IMR-90 (cell line): ENCODE measurements at regions of chr11 and their contacts with region 1.

Region 1: DNA sequence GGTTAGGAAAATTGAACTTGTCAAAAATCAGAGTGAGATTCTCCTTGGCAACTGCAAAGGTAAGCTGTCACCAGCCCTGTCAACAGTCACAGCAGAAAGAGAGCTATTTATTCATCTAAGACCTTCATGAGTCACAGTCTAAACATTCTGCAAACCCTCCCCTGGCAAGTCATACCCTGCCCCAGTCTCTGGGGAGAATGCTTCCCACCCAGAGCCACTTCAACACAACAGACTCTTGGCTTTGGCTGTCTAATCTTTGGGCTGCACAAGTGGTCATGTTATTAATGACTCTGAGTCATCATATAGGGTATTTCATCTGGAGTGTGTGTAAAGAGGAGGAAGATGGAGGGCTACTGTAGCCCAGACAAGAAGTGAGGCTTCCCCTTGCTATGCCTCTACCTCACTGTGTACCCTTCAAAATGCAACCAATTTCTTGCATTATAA is 153.4 kb downstream of the CCDC34 start:
- DNase-seq: peak; percentile 93
- ATAC-seq: peak; percentile 65
- H3K4me3 ChIP-seq: no peak overlapping the region
- H3K27ac ChIP-seq: no peak overlapping the region
- H3K4me1 ChIP-seq: peaks cover 7% of the 10 kb centered on the region
- H3K27me3 ChIP-seq: no peaks in the 10 kb centered on the region
- CTCF ChIP-seq: no peak
- POLR2A ChIP-seq: no peak
- RAD21 ChIP-seq: no peak

Region 2: GRCh38 chr11:27281740-27282590 is 72.4 kb after region 1 on chr11:
- CTCF ChIA-PET with region 1: interaction called, 3 read pairs
- POLR2A ChIA-PET with region 1: interaction called, 3 read pairs
- dilution Hi-C with region 1: no loop called
- in situ Hi-C with region 1: no loop called
- intact Hi-C with region 1: loop called (anchors 10 kb)
- DNase-seq: peak; percentile 90
- ATAC-seq: peak; percentile 99
- H3K4me3 ChIP-seq: no peak overlapping the region
- H3K27ac ChIP-seq: no peak overlapping the region
- H3K4me1 ChIP-seq: peaks cover 8% of the 10 kb centered on the region
- H3K27me3 ChIP-seq: peaks cover 15% of the 10 kb centered on the region
- CTCF ChIP-seq: no peak
- POLR2A ChIP-seq: no peak
- RAD21 ChIP-seq: no peak